ENCODE measurements at regions of chr5 and their contacts with region 1.

Region 1: GRCh38 chr5:150175076-150175935 is 8.7 kb downstream of the CDX1 start:
- DNase-seq: no peak
- H3K4me3 Mint-ChIP-seq: no peak overlapping the region
- H3K27ac Mint-ChIP-seq: no peak overlapping the region
- H3K4me1 Mint-ChIP-seq: no peaks in the 10 kb centered on the region
- H3K27me3 Mint-ChIP-seq: peaks cover 41% of the 10 kb centered on the region

Region 2: DNA sequence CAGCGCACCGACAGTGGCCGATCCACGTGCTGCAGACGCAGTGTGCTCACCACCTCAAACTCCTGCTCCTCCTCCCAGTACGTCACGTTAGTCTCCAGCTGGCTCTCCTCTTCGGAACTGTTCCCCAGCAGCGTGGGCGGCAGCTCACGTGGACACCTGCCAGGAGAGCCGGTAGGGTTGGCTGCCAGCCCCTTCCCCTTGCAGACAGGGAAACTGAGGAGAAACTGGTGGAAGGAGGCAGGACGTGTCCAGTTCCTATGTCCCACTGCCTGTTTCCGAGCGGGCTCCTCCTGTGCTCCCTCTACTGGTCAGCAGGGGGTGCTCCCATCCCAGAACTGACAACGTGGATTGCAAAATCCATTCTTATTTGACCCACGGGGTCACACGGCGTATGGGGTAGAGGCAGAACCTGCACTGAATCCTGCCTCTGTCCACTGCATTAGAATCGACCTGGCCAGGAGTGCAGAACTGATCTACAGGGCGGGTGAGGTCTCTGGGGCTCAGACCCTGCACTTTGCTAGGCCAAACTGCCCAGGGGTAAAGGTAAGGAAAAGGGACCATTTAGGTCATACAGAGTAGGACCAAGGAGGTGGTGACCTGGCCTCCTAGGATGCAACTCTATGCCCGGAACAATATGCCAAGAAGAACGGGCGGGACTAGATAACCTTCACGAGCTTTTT is 45.4 kb before region 1 on chr5:
- CTCF ChIA-PET with region 1: interaction called, 13 read pairs
- DNase-seq: peak; percentile 71
- H3K4me3 Mint-ChIP-seq: no peak overlapping the region
- H3K27ac Mint-ChIP-seq: no peak overlapping the region
- H3K4me1 Mint-ChIP-seq: peaks cover 2% of the 10 kb centered on the region
- H3K27me3 Mint-ChIP-seq: peaks cover 6% of the 10 kb centered on the region

Region 3: GRCh38 chr5:150161242-150162141 is 13.8 kb before region 1 on chr5:
- CTCF ChIA-PET with region 1: interaction called, 13 read pairs
- DNase-seq: peak; percentile 85
- H3K4me3 Mint-ChIP-seq: no peak overlapping the region
- H3K27ac Mint-ChIP-seq: no peak overlapping the region
- H3K4me1 Mint-ChIP-seq: no peaks in the 10 kb centered on the region
- H3K27me3 Mint-ChIP-seq: peaks cover 62% of the 10 kb centered on the region

Region 4: DNA sequence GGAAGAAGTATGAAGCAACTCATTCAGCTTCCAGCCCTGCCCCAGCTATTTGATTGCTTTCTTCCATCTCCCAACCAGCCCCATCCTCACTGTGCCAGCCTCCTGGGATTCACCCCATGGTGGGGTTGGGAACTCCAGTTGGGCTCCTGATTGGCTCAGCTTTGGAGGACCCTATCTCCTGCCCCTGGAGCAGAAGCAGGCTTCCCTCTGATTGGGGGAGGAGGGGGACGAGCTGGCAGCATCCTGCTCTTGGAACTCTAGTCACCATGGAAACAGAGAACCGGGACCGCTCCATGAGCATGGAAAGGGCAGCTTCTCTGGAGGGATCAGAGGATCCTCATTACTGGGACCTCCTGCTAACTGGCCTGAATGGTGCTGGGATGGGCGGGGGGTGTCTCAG is 17.2 kb after region 1 on chr5:
- CTCF ChIA-PET with region 1: no interaction called
- DNase-seq: no peak
- H3K4me3 Mint-ChIP-seq: no peak overlapping the region
- H3K27ac Mint-ChIP-seq: no peak overlapping the region
- H3K4me1 Mint-ChIP-seq: no peaks in the 10 kb centered on the region
- H3K27me3 Mint-ChIP-seq: peaks cover 83% of the 10 kb centered on the region

Region 5: GRCh38 chr5:150206098-150206778 is 30.9 kb after region 1 on chr5:
- CTCF ChIA-PET with region 1: no interaction called
- DNase-seq: no peak
- H3K4me3 Mint-ChIP-seq: no peak overlapping the region
- H3K27ac Mint-ChIP-seq: no peak overlapping the region
- H3K4me1 Mint-ChIP-seq: peaks cover 22% of the 10 kb centered on the region
- H3K27me3 Mint-ChIP-seq: peaks cover 57% of the 10 kb centered on the region